Caco-2 (cell line): ENCODE measurements at regions of chr9 and their contacts with region 1.

Region 1: GRCh38 chr9:21638104-21638503 is 156.0 kb upstream of the IFNE start:
- DNase-seq: no peak
- H3K4me3 ChIP-seq: no peak overlapping the region
- H3K4me3 Mint-ChIP-seq: no peak overlapping the region
- H3K27ac Mint-ChIP-seq: no peak overlapping the region
- H3K4me1 ChIP-seq: no peaks in the 10 kb centered on the region
- H3K4me1 Mint-ChIP-seq: no peaks in the 10 kb centered on the region
- H3K27me3 ChIP-seq: no peaks in the 10 kb centered on the region
- H3K27me3 Mint-ChIP-seq: no peaks in the 10 kb centered on the region
- CTCF ChIP-seq: no peak

Region 2: GRCh38 chr9:21696411-21696873 is 58.3 kb after region 1 on chr9:
- CTCF ChIA-PET with region 1: interaction called, 10 read pairs
- POLR2A ChIA-PET with region 1: no interaction called
- intact Hi-C with region 1: no loop called
- DNase-seq: peak in 1 of 2 experiments; percentile 31
- H3K4me3 ChIP-seq: no peak overlapping the region
- H3K4me3 Mint-ChIP-seq: no peak overlapping the region
- H3K27ac Mint-ChIP-seq: no peak overlapping the region
- H3K4me1 ChIP-seq: no peaks in the 10 kb centered on the region
- H3K4me1 Mint-ChIP-seq: no peaks in the 10 kb centered on the region
- H3K27me3 ChIP-seq: no peaks in the 10 kb centered on the region
- H3K27me3 Mint-ChIP-seq: no peaks in the 10 kb centered on the region
- CTCF ChIP-seq: no peak